ENCODE measurements at regions of chr12 and their contacts with region 1.

Region 1: DNA sequence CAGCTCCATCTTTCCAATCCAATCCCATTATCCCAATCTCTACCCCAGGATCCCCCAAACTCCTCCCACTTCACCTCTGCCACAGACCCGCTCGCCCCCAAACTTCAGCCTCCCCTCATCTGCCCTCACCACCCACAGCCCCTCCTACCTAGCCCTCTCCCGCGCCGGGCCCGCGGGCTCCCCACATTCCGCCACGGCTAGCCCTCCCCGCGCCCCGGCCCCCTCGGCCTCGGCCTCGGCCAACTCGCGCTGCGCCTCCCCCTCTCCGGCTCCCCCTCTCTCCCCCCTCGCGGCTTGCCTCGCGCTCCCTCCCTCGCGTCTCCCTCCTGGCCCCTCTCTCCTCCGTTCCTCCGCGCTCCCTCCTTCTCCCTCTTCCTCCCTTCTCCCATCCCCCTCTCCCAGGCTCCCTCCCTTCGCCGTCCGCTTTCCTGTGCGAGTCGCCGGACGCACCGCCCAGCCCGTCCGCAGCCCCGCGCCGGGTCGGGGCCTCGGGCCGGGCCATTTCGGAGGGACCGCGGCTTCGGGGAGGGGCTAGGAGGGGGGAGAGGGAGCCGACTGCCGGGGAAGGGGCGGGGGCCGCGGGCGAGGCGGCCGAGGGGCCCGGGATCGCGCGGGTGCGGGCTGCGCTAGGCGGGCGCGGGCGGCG is at the start of gene ATN1:
- DNase-seq: peak; percentile 83
- H3K4me3 ChIP-seq: peak within 1 kb of the TSS; percentile 88 to 92 (median 90)
- H3K27ac ChIP-seq: peak within 1 kb of the TSS; percentile 72
- H3K4me1 ChIP-seq: peaks cover 48% of the 10 kb centered on the region
- H3K27me3 ChIP-seq: no peaks in the 10 kb centered on the region
- CTCF ChIP-seq: no peak
- POLR2A ChIP-seq: peak; percentile 55
- total RNA-seq, gene ATN1: 117 and 122 TPM in 2 replicates

Region 2: DNA sequence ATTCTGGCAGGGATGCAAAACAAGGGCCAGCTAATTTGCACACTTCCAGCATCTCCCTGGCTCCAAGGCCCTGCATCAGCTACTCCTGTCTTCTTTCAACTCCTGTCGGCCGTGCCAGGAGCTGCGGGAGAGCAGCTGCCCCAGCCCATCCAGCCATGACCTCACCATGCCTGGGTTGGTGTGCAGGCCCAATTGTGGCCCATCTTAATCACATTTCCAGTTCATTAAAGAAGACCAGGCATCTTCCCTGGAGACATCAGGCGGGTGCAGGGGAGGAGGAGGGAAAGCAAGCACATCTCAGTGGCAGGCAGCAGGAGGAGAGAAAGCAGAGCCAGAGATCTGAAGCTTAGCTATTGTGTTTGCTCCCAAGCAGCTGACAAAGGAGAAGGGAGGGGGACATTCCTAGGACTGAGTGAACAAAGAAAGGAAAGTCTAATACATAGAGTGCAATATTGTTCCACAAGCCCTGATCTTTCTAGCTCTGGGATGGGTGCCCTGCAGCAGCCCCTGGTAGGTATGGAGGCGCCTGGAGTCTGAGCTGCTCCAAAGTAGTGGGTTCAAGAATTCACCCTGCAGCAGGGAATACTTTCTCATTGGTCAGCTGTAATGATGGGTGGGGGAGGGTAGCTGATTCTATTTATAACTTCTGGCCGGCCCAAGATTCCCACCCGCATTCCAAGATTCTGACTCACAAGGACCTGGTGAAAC is 843.1 kb before region 1 on chr12:
- CTCF ChIA-PET with region 1: no interaction called
- POLR2A ChIA-PET with region 1: no interaction called
- dilution Hi-C with region 1: no loop called
- intact Hi-C with region 1: no loop called
- DNase-seq: peak; percentile 63
- H3K4me3 ChIP-seq: no peak overlapping the region
- H3K27ac ChIP-seq: peak overlapping the region; percentile 85
- H3K4me1 ChIP-seq: peaks cover 60% of the 10 kb centered on the region
- H3K27me3 ChIP-seq: no peaks in the 10 kb centered on the region
- CTCF ChIP-seq: no peak
- POLR2A ChIP-seq: no peak

Region 3: GRCh38 chr12:6867413-6868210 is 59.9 kb before region 1 on chr12 and contains the start of gene TPI1:
- CTCF ChIA-PET with region 1: interaction called, 25 read pairs
- POLR2A ChIA-PET with region 1: interaction called, 3 read pairs
- dilution Hi-C with region 1: no loop called
- intact Hi-C with region 1: loop called (anchors 1 kb)
- DNase-seq: peak; percentile 78
- H3K4me3 ChIP-seq: peak within 1 kb of the TSS; percentile 60 to 95 (median 75)
- H3K27ac ChIP-seq: peak within 1 kb of the TSS; percentile 43
- H3K4me1 ChIP-seq: peaks cover 32% of the 10 kb centered on the region
- H3K27me3 ChIP-seq: no peaks in the 10 kb centered on the region
- CTCF ChIP-seq: no peak
- POLR2A ChIP-seq: peak; percentile 98
- total RNA-seq, gene TPI1: 643 and 676 TPM in 2 replicates

Region 4: GRCh38 chr12:6890789-6891645 is 36.5 kb before region 1 on chr12:
- CTCF ChIA-PET with region 1: interaction called, 8 read pairs
- POLR2A ChIA-PET with region 1: interaction called, 7 read pairs
- dilution Hi-C with region 1: no loop called
- intact Hi-C with region 1: loop called (anchors 1 kb)
- DNase-seq: peak; percentile 98
- H3K4me3 ChIP-seq: peak overlapping the region; percentile 36 to 67 (median 46)
- H3K27ac ChIP-seq: peak overlapping the region; percentile 96
- H3K4me1 ChIP-seq: peaks cover 10% of the 10 kb centered on the region
- H3K27me3 ChIP-seq: no peaks in the 10 kb centered on the region
- CTCF ChIP-seq: peak; percentile 83 to 89
- POLR2A ChIP-seq: peak; percentile 93

Region 5: GRCh38 chr12:6937481-6938297 is 10.2 kb after region 1 on chr12:
- CTCF ChIA-PET with region 1: interaction called, 94 read pairs
- POLR2A ChIA-PET with region 1: interaction called, 24 read pairs
- dilution Hi-C with region 1: no loop called
- intact Hi-C with region 1: loop called (anchors 1 kb)
- DNase-seq: peak; percentile 96
- H3K4me3 ChIP-seq: peak overlapping the region in 2 of 3 experiments; percentile 15 to 51
- H3K27ac ChIP-seq: peak overlapping the region; percentile 41
- H3K4me1 ChIP-seq: peaks cover 22% of the 10 kb centered on the region
- H3K27me3 ChIP-seq: no peaks in the 10 kb centered on the region
- CTCF ChIP-seq: peak; percentile 90 to 98
- POLR2A ChIP-seq: peak; percentile 94

Region 6: GRCh38 chr12:7092229-7092985 is 164.9 kb after region 1 on chr12 and contains the start of gene C1R:
- CTCF ChIA-PET with region 1: interaction called, 3 read pairs
- POLR2A ChIA-PET with region 1: no interaction called
- dilution Hi-C with region 1: no loop called
- intact Hi-C with region 1: loop called (anchors 1 kb)
- DNase-seq: peak; percentile 67
- H3K4me3 ChIP-seq: peak within 1 kb of the TSS; percentile 51 to 70 (median 64)
- H3K27ac ChIP-seq: no peak within 1 kb of the TSS
- H3K4me1 ChIP-seq: peaks cover 6% of the 10 kb centered on the region
- H3K27me3 ChIP-seq: peaks cover 0 to 16% of the 10 kb centered on the region in 2 experiments
- CTCF ChIP-seq: peak; percentile 85
- POLR2A ChIP-seq: no peak
- total RNA-seq, gene C1R: 3.1 and 3.6 TPM in 2 replicates

Region 7: GRCh38 chr12:7188562-7189397 is 261.3 kb after region 1 on chr12:
- CTCF ChIA-PET with region 1: no interaction called
- POLR2A ChIA-PET with region 1: no interaction called
- dilution Hi-C with region 1: no loop called
- intact Hi-C with region 1: loop called (anchors 1 kb)
- DNase-seq: peak; percentile 95
- H3K4me3 ChIP-seq: peak overlapping the region in 2 of 3 experiments; percentile 64 to 69
- H3K27ac ChIP-seq: peak overlapping the region; percentile 98
- H3K4me1 ChIP-seq: peaks cover 22% of the 10 kb centered on the region
- H3K27me3 ChIP-seq: no peaks in the 10 kb centered on the region
- CTCF ChIP-seq: peak; percentile 87 to 88
- POLR2A ChIP-seq: no peak

Measured in endothelial cell of umbilical vein (primary cell).